ENCODE measurements at regions of chr5 and their contacts with region 1.

Region 1: GRCh38 chr5:95846554-95847260 is 24.2 kb upstream of the GLRX start:
- DNase-seq: peak; percentile 63
- ATAC-seq: peak; percentile 69
- H3K4me3 ChIP-seq: no peak overlapping the region
- H3K27ac ChIP-seq: no peak overlapping the region
- H3K4me1 ChIP-seq: peaks cover 45% of the 10 kb centered on the region
- H3K27me3 ChIP-seq: no peaks in the 10 kb centered on the region
- CTCF ChIP-seq: peak; percentile 92
- EP300 ChIP-seq: no peak
- POLR2A ChIP-seq: no peak
- RAD21 ChIP-seq: peak; percentile 84

Region 2: GRCh38 chr5:94968507-94969095 is 878.1 kb before region 1 on chr5:
- CTCF ChIA-PET with region 1: no interaction called
- POLR2A ChIA-PET with region 1: no interaction called
- in situ Hi-C with region 1: no loop called
- intact Hi-C with region 1: loop called (anchors 10 kb)
- DNase-seq: peak; percentile 75
- ATAC-seq: peak; percentile 83
- H3K4me3 ChIP-seq: no peak overlapping the region
- H3K27ac ChIP-seq: no peak overlapping the region
- H3K4me1 ChIP-seq: no peaks in the 10 kb centered on the region
- H3K27me3 ChIP-seq: no peaks in the 10 kb centered on the region
- CTCF ChIP-seq: peak; percentile 72
- EP300 ChIP-seq: no peak
- POLR2A ChIP-seq: no peak
- RAD21 ChIP-seq: peak; percentile 44

Region 3: GRCh38 chr5:95406426-95407090 is 440.1 kb before region 1 on chr5:
- CTCF ChIA-PET with region 1: no interaction called
- POLR2A ChIA-PET with region 1: no interaction called
- in situ Hi-C with region 1: no loop called
- intact Hi-C with region 1: no loop called
- DNase-seq: no peak
- ATAC-seq: no peak
- H3K4me3 ChIP-seq: no peak overlapping the region
- H3K27ac ChIP-seq: no peak overlapping the region
- H3K4me1 ChIP-seq: no peaks in the 10 kb centered on the region
- H3K27me3 ChIP-seq: no peaks in the 10 kb centered on the region; a peak in 1 of 5 replicates
- CTCF ChIP-seq: no peak
- EP300 ChIP-seq: no peak
- POLR2A ChIP-seq: no peak
- RAD21 ChIP-seq: no peak

Region 4: GRCh38 chr5:95554647-95555548 is 291.8 kb before region 1 on chr5 and contains the starts of genes ARSK and SKIC3:
- CTCF ChIA-PET with region 1: no interaction called
- POLR2A ChIA-PET with region 1: no interaction called
- in situ Hi-C with region 1: loop called (anchors 10 kb)
- intact Hi-C with region 1: loop called (anchors 10 kb)
- DNase-seq: peak; percentile 97
- ATAC-seq: peak; percentile 97
- H3K4me3 ChIP-seq: peak within 1 kb of the TSS; percentile 80 to 92 (median 85)
- H3K27ac ChIP-seq: peak within 1 kb of the TSS; percentile 92
- H3K4me1 ChIP-seq: peaks cover 32% of the 10 kb centered on the region
- H3K27me3 ChIP-seq: no peaks in the 10 kb centered on the region; a peak in 1 of 5 replicates
- CTCF ChIP-seq: peak; percentile 51
- EP300 ChIP-seq: no peak
- POLR2A ChIP-seq: peak; percentile 80 to 84; a peak in 3 of 4 replicates
- RAD21 ChIP-seq: peak; percentile 60; the same call in 1 of the 2 replicates
- total RNA-seq, gene ARSK: 5.9 and 7.9 TPM in 2 replicates
- total RNA-seq, gene SKIC3: 61.5 and 86.9 TPM in 2 replicates

Region 5: GRCh38 chr5:95664204-95664786 is 182.4 kb before region 1 on chr5:
- CTCF ChIA-PET with region 1: interaction called, 10 read pairs
- POLR2A ChIA-PET with region 1: no interaction called
- in situ Hi-C with region 1: no loop called
- intact Hi-C with region 1: loop called (anchors 1 kb)
- DNase-seq: peak; percentile 25
- ATAC-seq: peak; percentile 43; the same call in 1 of the 3 replicates
- H3K4me3 ChIP-seq: no peak overlapping the region
- H3K27ac ChIP-seq: no peak overlapping the region
- H3K4me1 ChIP-seq: peaks cover 6% of the 10 kb centered on the region; the same call in 1 of the 2 replicates
- H3K27me3 ChIP-seq: no peaks in the 10 kb centered on the region
- CTCF ChIP-seq: peak; percentile 68
- EP300 ChIP-seq: no peak
- POLR2A ChIP-seq: no peak
- RAD21 ChIP-seq: peak; percentile 33; the same call in 1 of the 2 replicates

Region 6: GRCh38 chr5:95803284-95804148 is 43.2 kb before region 1 on chr5:
- CTCF ChIA-PET with region 1: no interaction called
- POLR2A ChIA-PET with region 1: interaction called, 3 read pairs
- in situ Hi-C with region 1: no loop called
- intact Hi-C with region 1: loop called (anchors 5 kb)
- DNase-seq: peak; percentile 84
- ATAC-seq: peak; percentile 97
- H3K4me3 ChIP-seq: peak overlapping the region in 1 of 3 experiments; percentile 39; a peak in 2 of 6 replicates
- H3K27ac ChIP-seq: peak overlapping the region; percentile 76
- H3K4me1 ChIP-seq: peaks cover 72% of the 10 kb centered on the region
- H3K27me3 ChIP-seq: no peaks in the 10 kb centered on the region
- CTCF ChIP-seq: no peak
- EP300 ChIP-seq: peak in 1 of 2 experiments; percentile 24; a peak in 1 of 4 replicates
- POLR2A ChIP-seq: no peak
- RAD21 ChIP-seq: no peak

Region 7: DNA sequence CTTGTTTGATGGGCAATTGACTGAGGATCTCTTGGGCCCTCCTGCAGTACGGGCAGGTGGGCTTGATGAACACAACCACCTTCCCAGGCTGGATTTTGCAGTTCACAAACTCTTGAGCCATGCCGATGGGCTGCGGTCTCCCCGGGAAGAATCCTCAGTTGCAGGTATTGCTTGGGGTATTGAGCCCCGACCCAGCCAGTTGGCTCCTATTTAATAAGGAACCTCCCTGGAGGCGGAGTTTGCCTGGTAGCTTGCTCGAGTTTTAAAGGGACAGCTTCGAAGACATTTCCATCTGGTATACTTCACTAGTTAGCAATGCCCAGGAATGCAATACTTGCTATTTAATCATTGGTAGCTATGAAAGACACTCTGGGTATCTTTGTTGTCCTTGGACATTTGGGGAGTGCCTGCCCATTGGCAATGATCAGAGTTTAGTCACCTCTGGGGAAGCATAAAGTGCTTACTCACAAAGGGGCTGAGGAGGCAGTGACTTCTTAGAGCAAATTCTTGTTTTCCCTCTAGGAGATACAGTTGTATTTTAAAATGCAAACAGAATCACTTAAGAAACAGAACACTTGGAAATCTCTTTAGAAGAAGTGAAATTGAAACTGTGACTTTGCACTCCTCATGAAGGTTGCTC is 24.0 kb before region 1 on chr5 and contains the start of gene GLRX:
- CTCF ChIA-PET with region 1: no interaction called
- POLR2A ChIA-PET with region 1: interaction called, 23 read pairs
- in situ Hi-C with region 1: no loop called
- intact Hi-C with region 1: loop called (anchors 2 kb)
- DNase-seq: peak; percentile 65
- ATAC-seq: peak; percentile 63
- H3K4me3 ChIP-seq: peak within 1 kb of the TSS; percentile 66 to 86 (median 81)
- H3K27ac ChIP-seq: peak within 1 kb of the TSS; percentile 89
- H3K4me1 ChIP-seq: peaks cover 87% of the 10 kb centered on the region
- H3K27me3 ChIP-seq: no peaks in the 10 kb centered on the region; a peak in 1 of 5 replicates
- CTCF ChIP-seq: no peak
- EP300 ChIP-seq: no peak
- POLR2A ChIP-seq: peak; percentile 82 to 95
- RAD21 ChIP-seq: no peak
- total RNA-seq, gene GLRX: 63.8 and 71.9 TPM in 2 replicates